Activated T-helper 2 cell treated with anti-CD3 and anti-CD28 coated beads, Interferon-gamma antibody, Interleukin-2, Interleukin-4, amounts not matched to agents 10 μg/mL and 5 μg/mL and 100 μg/mL, durations not matched to agents 14 hours and 24 hours and 36 hours (primary cell): ENCODE measurements at regions of chr9 and their contacts with region 1.

Region 1: GRCh38 chr9:8188720-8189407 is 389.3 kb upstream of the DMAC1 start:
- DNase-seq: no peak
- H3K4me3 Mint-ChIP-seq: no peak overlapping the region
- H3K27ac Mint-ChIP-seq: peak overlapping the region; percentile 46
- H3K4me1 Mint-ChIP-seq: peaks cover 18% of the 10 kb centered on the region
- H3K27me3 Mint-ChIP-seq: no peaks in the 10 kb centered on the region

Region 2: GRCh38 chr9:7799234-7799943 is 389.5 kb before region 1 on chr9 and contains the start of gene DMAC1:
- intact Hi-C with region 1: loop called (anchors 5 kb)
- DNase-seq: peak; percentile 70
- H3K4me3 Mint-ChIP-seq: peak within 1 kb of the TSS; percentile 90
- H3K27ac Mint-ChIP-seq: peak within 1 kb of the TSS; percentile 89
- H3K4me1 Mint-ChIP-seq: peaks cover 23% of the 10 kb centered on the region
- H3K27me3 Mint-ChIP-seq: no peaks in the 10 kb centered on the region
- total RNA-seq, gene DMAC1: 50.5 and 51.0 TPM in 2 replicates

Region 3: DNA sequence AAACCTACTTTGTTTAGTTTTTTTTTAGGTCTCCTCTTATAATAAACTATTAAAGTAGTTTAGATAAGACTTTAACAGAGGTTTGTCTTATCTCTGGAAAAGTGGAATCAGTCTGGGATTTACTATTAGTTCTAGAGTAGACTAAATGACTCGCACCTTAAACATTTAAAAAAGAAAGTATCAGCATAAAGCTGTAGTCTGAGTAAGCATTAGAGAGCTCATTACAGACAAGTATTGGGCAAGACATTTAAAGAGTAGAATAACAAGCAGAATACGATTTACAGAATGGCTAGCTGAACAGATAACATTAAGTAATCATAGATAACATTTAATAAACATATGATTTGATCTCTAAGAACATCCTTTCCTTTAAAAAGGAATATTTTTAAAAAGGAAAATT is 163.3 kb before region 1 on chr9:
- intact Hi-C with region 1: no loop called
- DNase-seq: no peak
- H3K4me3 Mint-ChIP-seq: no peak overlapping the region
- H3K27ac Mint-ChIP-seq: no peak overlapping the region
- H3K4me1 Mint-ChIP-seq: no peaks in the 10 kb centered on the region
- H3K27me3 Mint-ChIP-seq: no peaks in the 10 kb centered on the region

Region 4: DNA sequence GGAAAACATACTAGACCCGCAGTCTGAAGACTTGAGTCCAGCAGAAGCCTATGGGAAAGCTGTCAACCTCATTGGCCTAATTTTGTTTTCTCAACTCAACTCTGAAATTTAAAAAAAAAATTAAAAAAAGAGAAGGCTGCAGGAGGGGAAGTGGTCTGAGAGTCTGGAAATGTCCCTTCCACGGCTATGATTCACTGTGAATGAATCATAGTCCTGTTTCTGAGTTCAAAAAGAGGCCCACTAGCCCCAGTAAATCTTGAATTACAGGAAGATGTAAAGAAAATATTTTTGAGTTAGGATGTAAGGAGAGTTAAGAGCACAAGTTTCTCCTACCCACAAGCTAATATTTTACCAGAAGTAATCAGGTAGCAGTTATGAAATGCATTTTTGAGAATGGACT is 176.2 kb after region 1 on chr9:
- intact Hi-C with region 1: loop called (anchors 5 kb)
- DNase-seq: no peak
- H3K4me3 Mint-ChIP-seq: no peak overlapping the region
- H3K27ac Mint-ChIP-seq: peak overlapping the region; percentile 4
- H3K4me1 Mint-ChIP-seq: peaks cover 12% of the 10 kb centered on the region
- H3K27me3 Mint-ChIP-seq: no peaks in the 10 kb centered on the region

Region 5: GRCh38 chr9:9079473-9079872 is 890.6 kb after region 1 on chr9:
- intact Hi-C with region 1: no loop called
- DNase-seq: no peak
- H3K4me3 Mint-ChIP-seq: no peak overlapping the region
- H3K27ac Mint-ChIP-seq: no peak overlapping the region
- H3K4me1 Mint-ChIP-seq: no peaks in the 10 kb centered on the region
- H3K27me3 Mint-ChIP-seq: no peaks in the 10 kb centered on the region